ENCODE measurements at regions of chr16 and their contacts with region 1.

Region 1: DNA sequence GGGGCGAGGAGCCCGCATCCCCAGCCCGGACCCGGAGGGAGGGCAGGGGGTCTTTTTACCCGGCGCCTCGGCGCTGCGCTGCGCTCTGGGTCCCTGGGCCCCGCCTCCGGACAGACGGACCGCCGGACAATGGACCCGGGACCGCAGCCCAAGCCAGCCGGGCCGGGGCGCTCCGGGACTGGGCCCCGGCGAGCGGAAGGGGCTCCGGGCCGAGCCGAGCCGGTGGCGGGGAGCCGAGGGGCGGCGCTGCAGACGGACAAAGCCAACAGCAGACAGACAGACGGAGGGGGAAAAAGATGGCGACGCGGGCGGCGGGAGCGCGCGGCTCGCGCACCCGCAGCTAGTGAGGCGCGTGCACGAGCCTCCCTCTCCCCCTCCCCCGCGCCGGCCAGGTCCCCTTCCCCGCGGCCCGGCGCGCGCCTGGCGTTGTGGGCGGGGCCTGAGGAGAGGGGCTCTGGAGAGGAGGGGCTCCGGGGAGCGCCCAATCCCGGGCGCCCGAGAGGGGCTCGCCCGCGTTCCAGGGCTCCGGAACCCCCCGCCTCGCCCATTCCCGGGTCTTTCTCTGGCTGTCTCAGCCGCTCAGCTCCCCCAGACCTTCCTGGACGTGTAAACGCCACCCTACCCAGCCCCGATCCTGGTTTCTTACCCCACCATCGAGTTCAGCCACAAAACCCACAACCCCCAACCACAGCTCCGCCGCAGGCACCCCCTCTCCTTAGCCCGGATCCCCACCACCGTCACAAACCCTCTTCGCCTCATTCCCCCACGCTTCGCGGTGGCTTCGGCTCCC is at the start of gene ZNF821:
- DNase-seq: peak; percentile 73
- H3K4me3 Mint-ChIP-seq: peak within 1 kb of the TSS; percentile 93
- H3K27ac Mint-ChIP-seq: peak within 1 kb of the TSS; percentile 80
- H3K4me1 Mint-ChIP-seq: peaks cover 46% of the 10 kb centered on the region
- H3K27me3 Mint-ChIP-seq: no peaks in the 10 kb centered on the region
- total RNA-seq, gene ZNF821: 5.9 TPM

Region 2: DNA sequence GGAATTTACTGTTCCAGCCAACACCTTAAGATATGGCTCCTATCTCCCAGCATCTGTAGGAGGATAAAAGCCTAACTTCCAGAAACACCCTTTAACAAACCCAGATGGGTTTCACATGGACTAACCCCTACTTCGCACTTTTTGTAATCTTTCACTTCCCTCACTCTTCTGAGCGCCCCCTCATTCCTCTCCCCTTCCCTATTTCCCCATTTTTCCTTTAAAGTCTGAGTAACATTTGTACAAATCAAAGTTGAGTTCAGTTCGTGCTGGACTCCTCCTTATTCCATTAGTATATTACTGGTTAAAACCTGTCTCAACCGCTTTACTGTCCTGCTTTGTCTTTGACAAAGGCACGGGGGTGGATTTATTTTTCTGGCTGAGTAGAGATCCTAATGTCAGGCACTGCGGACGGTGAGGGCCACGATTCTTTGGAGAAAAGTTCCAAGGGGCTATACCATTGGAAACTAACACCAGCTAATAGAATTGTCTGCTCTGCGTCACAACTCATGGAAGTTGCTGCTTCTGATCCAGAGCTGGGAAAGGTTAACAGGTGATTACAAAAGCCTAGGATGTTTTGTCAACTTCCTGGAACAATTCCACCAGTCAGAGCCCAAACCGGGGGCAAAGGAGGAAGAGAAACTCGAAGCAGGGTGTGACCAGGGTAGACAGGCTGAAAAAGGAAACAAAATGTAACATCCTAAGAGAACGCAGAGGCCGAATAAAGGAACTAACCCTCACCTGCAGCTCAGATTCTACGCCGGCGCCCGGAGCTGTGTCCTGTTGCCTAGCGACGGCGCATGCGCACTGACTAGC is 319.7 kb before region 1 on chr16:
- CTCF ChIA-PET with region 1: interaction called, 4 read pairs
- intact Hi-C with region 1: loop called (anchors 5 kb)
- DNase-seq: no peak
- H3K4me3 Mint-ChIP-seq: peak overlapping the region; percentile 80
- H3K27ac Mint-ChIP-seq: peak overlapping the region; percentile 88
- H3K4me1 Mint-ChIP-seq: peaks cover 15% of the 10 kb centered on the region
- H3K27me3 Mint-ChIP-seq: no peaks in the 10 kb centered on the region

Region 3: DNA sequence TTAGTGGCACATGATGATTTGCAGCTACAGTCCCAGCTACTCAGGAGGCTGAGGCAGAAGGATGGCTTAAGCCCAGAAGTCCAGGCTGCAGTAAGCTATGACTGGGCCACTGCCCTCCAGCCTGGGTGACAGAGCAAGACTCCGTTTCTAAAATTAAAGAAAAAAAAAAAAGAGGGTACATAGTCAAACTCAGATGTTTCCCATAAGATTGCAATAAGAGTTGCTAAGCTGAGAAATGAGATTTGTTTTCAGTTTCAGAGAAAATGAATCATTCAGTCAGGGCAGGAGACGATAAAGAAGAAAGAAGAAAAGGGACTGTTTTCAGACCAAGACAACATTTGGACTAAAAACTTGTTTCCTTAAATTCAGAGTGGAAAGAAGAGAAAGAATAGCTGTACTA is 129.4 kb before region 1 on chr16:
- CTCF ChIA-PET with region 1: no interaction called
- intact Hi-C with region 1: loop called (anchors 2 kb)
- DNase-seq: peak; percentile 10
- H3K4me3 Mint-ChIP-seq: no peak overlapping the region
- H3K27ac Mint-ChIP-seq: peak overlapping the region; percentile 81
- H3K4me1 Mint-ChIP-seq: peaks cover 23% of the 10 kb centered on the region
- H3K27me3 Mint-ChIP-seq: no peaks in the 10 kb centered on the region

Region 4: DNA sequence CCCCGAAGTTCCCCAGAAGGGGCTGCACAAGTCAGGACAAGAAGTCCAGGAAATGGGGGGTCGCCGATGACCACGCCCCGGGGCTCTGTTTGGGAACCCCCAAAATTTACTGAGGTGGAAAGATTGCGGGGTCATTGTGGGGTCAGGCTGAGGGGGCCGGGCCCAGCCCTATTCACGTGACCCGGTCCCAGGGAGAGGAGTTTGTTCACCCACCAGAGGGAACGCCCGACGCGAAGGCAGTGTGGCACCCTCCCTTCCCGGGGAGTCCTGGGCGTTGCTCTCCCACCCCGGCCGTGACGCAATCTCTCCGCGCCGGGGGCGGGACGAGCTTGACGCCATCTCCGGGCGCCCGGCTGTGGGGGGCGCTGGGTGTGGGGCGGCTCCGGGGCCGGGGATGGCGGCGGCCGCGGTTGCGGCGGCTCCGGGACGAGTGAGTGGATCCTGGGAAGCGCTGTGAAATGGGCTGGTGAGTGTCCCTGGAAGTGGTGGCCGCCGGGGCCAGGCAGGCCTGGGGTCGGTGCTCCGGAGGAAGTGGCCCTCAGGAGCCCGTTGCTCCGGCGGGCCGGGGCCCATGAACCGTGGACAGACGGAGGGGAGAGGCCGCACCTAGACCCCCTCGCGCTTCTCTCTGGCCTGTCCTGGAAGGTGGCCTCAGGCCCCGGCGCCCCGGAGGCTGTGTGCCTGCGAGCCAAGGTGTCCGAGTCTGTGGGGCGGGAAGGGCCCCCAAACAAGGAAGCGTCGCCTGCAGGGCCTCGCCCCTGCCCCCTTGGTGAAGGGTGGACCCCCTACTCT is 38.2 kb before region 1 on chr16 and contains the start of gene ATXN1L:
- CTCF ChIA-PET with region 1: interaction called, 21 read pairs
- intact Hi-C with region 1: loop called (anchors 1 kb)
- DNase-seq: peak; percentile 90
- H3K4me3 Mint-ChIP-seq: peak within 1 kb of the TSS; percentile 88
- H3K27ac Mint-ChIP-seq: peak within 1 kb of the TSS; percentile 93
- H3K4me1 Mint-ChIP-seq: peaks cover 44% of the 10 kb centered on the region
- H3K27me3 Mint-ChIP-seq: no peaks in the 10 kb centered on the region
- total RNA-seq, gene ATXN1L: 11.3 to 11.9 TPM

Region 5: GRCh38 chr16:71859762-71860521 is 24.1 kb before region 1 on chr16:
- CTCF ChIA-PET with region 1: interaction called, 17 read pairs
- intact Hi-C with region 1: loop called (anchors 2 kb)
- DNase-seq: no peak
- H3K4me3 Mint-ChIP-seq: no peak overlapping the region
- H3K27ac Mint-ChIP-seq: no peak overlapping the region
- H3K4me1 Mint-ChIP-seq: peaks cover 16% of the 10 kb centered on the region
- H3K27me3 Mint-ChIP-seq: no peaks in the 10 kb centered on the region

Region 6: DNA sequence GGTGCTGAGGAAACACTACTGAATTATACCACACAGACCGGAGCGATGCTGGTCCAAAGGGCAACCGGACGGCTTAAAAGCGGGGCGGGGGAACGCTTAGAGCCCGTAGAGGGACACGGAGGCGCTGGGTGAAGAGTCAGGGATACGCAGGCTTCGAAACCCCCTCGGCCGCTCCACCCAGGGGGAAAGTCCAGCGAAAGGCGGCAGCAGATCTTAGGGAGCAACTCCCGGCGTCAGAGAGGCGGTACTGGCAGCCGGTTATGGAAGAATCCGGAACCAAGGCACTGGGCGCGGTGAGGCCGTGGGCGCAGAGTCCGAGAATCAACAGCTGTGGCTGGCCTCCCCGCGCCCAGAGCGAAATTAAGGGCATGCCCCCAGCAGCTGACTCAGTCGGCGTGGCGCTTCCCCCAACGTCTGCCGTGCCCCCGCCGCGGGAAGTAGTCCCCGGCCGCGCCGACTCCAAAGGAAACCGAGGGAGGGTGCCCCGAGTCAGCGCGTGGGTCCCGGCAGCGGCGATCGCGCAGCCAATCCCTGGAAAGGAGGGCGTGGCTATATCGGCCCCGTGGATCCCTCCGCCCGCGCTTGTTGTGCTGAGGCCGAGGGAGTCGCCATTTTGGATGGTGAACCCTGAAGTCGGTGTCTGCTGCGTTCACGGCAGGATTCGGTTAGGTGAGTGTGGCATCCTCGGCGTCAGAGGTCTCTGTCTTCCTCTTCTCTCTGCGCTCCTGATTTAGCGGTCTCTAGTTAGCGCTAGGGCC is 11.1 kb after region 1 on chr16 and contains the start of gene IST1:
- CTCF ChIA-PET with region 1: interaction called, 24 read pairs
- intact Hi-C with region 1: loop called (anchors 1 kb)
- DNase-seq: peak; percentile 99
- H3K4me3 Mint-ChIP-seq: peak within 1 kb of the TSS; percentile 97
- H3K27ac Mint-ChIP-seq: peak within 1 kb of the TSS; percentile 96
- H3K4me1 Mint-ChIP-seq: peaks cover 33% of the 10 kb centered on the region
- H3K27me3 Mint-ChIP-seq: no peaks in the 10 kb centered on the region
- total RNA-seq, gene IST1: 196 to 203 TPM

Region 7: DNA sequence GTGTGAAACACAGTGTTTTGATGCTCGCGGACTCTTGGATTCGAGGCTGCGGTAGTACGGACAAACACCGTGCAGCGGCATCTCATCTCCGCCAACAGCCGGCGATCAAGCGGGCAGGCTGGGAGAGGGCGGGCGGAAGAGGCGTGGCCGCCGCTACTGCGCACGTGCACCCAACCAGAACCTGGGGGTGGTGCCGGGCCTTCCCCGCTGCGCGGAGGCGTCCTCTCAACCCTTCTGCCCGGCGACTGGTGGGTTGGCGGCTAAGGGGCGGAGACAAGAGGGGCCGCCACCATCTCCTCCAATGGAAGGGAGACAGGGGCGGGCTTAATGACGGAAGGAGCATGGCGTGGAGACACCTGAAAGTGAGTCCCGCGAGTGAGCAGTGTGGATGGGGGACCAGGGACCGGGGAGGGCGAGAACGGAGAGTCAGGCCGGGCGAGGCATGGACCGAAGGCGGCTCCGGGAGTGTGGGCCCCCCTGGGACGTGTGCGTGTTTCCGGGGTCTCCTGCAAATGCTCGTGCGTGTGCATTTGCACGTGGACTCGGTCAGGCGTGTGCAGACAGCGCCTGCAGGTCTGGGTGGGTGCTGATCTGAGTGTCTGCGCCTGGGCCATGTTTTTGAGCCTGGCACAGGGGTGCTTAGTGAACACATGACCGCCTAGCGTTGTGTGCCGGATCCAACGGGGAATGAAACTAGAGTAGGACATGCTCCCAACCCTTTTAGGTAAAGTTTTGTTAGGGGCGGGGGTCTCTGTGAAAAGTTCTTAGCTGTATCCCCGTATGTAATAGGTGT is 124.6 kb after region 1 on chr16 and contains the start of gene DHODH:
- CTCF ChIA-PET with region 1: no interaction called
- intact Hi-C with region 1: loop called (anchors 2 kb)
- DNase-seq: peak; percentile 99
- H3K4me3 Mint-ChIP-seq: peak within 1 kb of the TSS; percentile 94
- H3K27ac Mint-ChIP-seq: peak within 1 kb of the TSS; percentile 76
- H3K4me1 Mint-ChIP-seq: peaks cover 21% of the 10 kb centered on the region
- H3K27me3 Mint-ChIP-seq: no peaks in the 10 kb centered on the region
- total RNA-seq, gene DHODH: 18.3 to 19.9 TPM

Measured in activated naive CD4-positive, alpha-beta T cell treated with anti-CD3 and anti-CD28 coated beads for 36 hours (primary cell).